ENCODE measurements at regions of chr4 and their contacts with region 1.

Region 1: DNA sequence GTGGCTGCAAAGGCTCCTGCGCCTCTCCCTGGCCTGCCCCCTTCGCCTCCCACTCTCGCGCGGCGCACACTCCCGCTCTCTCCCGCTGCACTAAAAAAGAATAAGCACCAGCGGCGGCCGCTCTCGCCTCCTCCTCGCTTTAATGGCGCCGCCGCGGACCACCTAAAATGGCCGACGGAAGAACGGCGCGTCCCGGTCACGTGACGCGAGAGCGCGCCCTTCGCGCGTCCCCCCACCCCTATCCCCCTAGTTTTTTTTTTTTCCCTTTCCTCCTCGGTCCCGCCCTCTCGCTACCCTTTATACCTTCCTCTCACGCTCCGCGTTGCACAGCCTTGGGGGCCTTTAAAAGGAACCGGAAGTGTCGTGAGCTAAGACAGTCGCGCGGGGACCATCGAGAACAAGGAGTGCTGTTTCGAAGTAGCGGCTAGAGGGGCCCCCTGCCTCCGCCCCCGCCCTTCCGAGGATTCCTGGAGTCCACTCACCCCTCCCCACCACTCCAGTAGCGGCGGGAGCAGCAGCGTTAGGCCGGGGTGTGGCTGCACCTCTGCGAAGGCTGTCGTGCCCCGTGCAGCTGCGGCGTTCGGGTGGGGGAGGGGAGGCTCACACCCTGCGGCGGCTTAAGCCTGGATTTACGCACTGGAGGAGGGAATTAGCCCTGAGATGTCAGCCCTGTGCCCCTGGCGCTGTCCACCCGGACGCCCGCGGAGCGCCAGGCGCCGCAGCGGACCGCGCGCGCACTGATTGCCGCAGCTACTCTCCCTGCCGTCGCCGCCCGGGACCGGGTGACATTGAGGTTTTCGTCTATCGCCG is at the start of gene HNRNPD:
- DNase-seq: peak; percentile 96 to 99 (median 98)
- H3K4me3 ChIP-seq: peak within 1 kb of the TSS; percentile 97
- H3K27ac ChIP-seq: peak within 1 kb of the TSS; percentile 94 to 95
- H3K4me1 ChIP-seq: peaks cover 5% of the 10 kb centered on the region
- H3K27me3 ChIP-seq: no peaks in the 10 kb centered on the region
- CTCF ChIP-seq: peak in 2 of 3 donors; percentile 7 to 30
- EP300 ChIP-seq: no peak
- POLR2A ChIP-seq: peak; percentile 91
- total RNA-seq, gene HNRNPD: 85.1 to 243 (median 185) TPM

Region 2: GRCh38 chr4:82428969-82429727 is 55.1 kb after region 1 on chr4:
- intact Hi-C with region 1: loop called (anchors 1 to 5 kb)
- DNase-seq: peak; percentile 92 to 97 (median 94)
- H3K4me3 ChIP-seq: peak overlapping the region; percentile 95
- H3K27ac ChIP-seq: peak overlapping the region; percentile 91 to 94
- H3K4me1 ChIP-seq: peaks cover 6% of the 10 kb centered on the region
- H3K27me3 ChIP-seq: no peaks in the 10 kb centered on the region
- CTCF ChIP-seq: peak; percentile 93 to 98 (median 98)
- EP300 ChIP-seq: no peak
- POLR2A ChIP-seq: peak; percentile 87

Measured in ovary (tissue), 10 donors.